HepG2 (cell line): ENCODE measurements at regions of chr2 and their contacts with region 1.

Region 1: DNA sequence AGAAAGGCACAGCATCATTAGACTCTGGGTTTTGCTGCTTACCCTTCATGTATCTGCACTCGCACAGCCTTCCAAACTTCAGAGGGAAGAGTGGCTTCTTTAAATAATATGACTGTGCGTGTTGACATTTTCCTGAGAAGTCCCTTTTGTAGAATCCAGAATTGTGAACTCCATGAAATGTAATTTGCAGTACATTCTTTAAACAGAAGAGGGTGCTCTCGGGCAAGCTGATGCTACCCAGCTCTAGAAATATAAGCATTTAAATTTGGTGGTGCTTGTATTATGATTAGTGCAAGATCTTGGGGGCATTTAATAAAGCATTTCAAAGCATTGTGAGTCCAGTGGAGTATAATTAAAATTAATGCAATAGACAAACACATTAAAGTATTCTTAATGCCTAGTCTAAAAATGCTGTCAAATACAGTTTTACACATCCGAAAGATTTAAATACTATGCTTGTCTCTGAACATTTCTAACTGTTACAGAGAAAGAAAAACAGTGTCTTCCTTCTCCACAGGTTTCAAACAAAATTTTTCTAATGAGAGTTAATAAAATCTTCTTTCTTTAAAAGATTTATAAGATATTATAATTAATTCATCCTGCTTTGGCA is 17.3 kb upstream of the GTF2A1L start:
- DNase-seq: peak; percentile 42
- ATAC-seq: peak; percentile 50
- H3K4me3 ChIP-seq: no peak overlapping the region
- H3K27ac ChIP-seq: no peak overlapping the region
- H3K4me1 ChIP-seq: no peaks in the 10 kb centered on the region
- H3K27me3 ChIP-seq: no peaks in the 10 kb centered on the region
- CTCF ChIP-seq: peak; percentile 69
- EP300 ChIP-seq: no peak
- POLR2A ChIP-seq: no peak
- RAD21 ChIP-seq: no peak; the same call in 1 of the 2 replicates

Region 2: GRCh38 chr2:47554311-47554905 is 1045.9 kb before region 1 on chr2:
- CTCF ChIA-PET with region 1: no interaction called
- POLR2A ChIA-PET with region 1: no interaction called
- in situ Hi-C with region 1: no loop called
- intact Hi-C with region 1: no loop called
- DNase-seq: no peak
- ATAC-seq: no peak
- H3K4me3 ChIP-seq: no peak overlapping the region
- H3K27ac ChIP-seq: no peak overlapping the region
- H3K4me1 ChIP-seq: no peaks in the 10 kb centered on the region
- H3K27me3 ChIP-seq: no peaks in the 10 kb centered on the region; a peak in 1 of 5 replicates
- CTCF ChIP-seq: no peak
- EP300 ChIP-seq: no peak
- POLR2A ChIP-seq: no peak
- RAD21 ChIP-seq: no peak

Region 3: DNA sequence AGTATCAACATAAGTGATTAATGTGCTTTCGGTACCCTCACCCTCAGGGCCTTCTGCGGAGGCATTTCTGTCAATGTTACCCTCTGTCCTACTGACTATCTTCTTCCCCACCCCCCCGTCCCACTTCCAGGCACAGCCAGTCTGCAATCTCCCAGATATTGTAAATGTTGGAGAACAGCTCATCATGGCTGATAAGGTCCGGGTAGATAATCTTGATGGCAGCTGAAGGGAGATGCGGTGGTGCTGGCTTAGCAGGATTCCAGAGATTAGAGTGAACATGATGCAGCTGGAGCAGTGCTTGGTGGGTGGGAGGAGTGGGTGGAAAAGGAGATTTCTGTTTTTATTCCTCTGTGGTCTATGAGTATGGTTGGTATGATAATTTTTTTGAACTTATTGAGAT is 32.8 kb after region 1 on chr2:
- CTCF ChIA-PET with region 1: no interaction called
- POLR2A ChIA-PET with region 1: no interaction called
- in situ Hi-C with region 1: no loop called
- intact Hi-C with region 1: no loop called
- DNase-seq: no peak
- ATAC-seq: no peak
- H3K4me3 ChIP-seq: no peak overlapping the region
- H3K27ac ChIP-seq: no peak overlapping the region
- H3K4me1 ChIP-seq: no peaks in the 10 kb centered on the region
- H3K27me3 ChIP-seq: no peaks in the 10 kb centered on the region; a peak in 1 of 5 replicates
- CTCF ChIP-seq: no peak
- EP300 ChIP-seq: no peak
- POLR2A ChIP-seq: no peak
- RAD21 ChIP-seq: no peak

Region 4: GRCh38 chr2:48668992-48669391 is 68.7 kb after region 1 on chr2:
- CTCF ChIA-PET with region 1: no interaction called
- POLR2A ChIA-PET with region 1: no interaction called
- in situ Hi-C with region 1: no loop called
- intact Hi-C with region 1: no loop called
- DNase-seq: no peak
- ATAC-seq: no peak
- H3K4me3 ChIP-seq: no peak overlapping the region
- H3K27ac ChIP-seq: no peak overlapping the region
- H3K4me1 ChIP-seq: no peaks in the 10 kb centered on the region
- H3K27me3 ChIP-seq: no peaks in the 10 kb centered on the region
- CTCF ChIP-seq: no peak
- EP300 ChIP-seq: no peak
- POLR2A ChIP-seq: no peak
- RAD21 ChIP-seq: no peak

Region 5: DNA sequence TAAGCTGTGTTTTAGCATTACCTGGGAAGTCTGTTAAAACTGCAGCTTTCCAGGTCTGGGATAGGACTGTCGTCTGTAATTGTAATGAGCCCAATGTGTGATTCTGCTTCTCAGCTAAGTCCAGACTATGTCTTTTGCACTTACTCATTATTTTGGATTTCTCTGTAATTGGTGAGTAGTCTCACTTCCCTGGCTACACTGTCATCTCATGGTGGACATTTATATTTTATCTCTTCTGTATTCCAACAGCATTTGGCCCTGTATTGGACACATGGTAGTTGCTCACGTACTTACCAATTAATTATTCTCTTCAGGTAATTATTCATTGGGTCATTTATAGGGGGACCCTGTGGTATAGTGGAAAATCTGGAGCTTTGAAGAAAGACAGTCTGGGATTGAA is 127.3 kb after region 1 on chr2:
- CTCF ChIA-PET with region 1: no interaction called
- POLR2A ChIA-PET with region 1: no interaction called
- in situ Hi-C with region 1: loop called (anchors 10 kb)
- intact Hi-C with region 1: loop called (anchors 1 kb)
- DNase-seq: no peak
- ATAC-seq: no peak
- H3K4me3 ChIP-seq: no peak overlapping the region
- H3K27ac ChIP-seq: no peak overlapping the region
- H3K4me1 ChIP-seq: no peaks in the 10 kb centered on the region
- H3K27me3 ChIP-seq: no peaks in the 10 kb centered on the region
- CTCF ChIP-seq: no peak
- EP300 ChIP-seq: no peak
- POLR2A ChIP-seq: no peak
- RAD21 ChIP-seq: no peak